ENCODE measurements at regions of chr14 and their contacts with region 1.

Region 1: DNA sequence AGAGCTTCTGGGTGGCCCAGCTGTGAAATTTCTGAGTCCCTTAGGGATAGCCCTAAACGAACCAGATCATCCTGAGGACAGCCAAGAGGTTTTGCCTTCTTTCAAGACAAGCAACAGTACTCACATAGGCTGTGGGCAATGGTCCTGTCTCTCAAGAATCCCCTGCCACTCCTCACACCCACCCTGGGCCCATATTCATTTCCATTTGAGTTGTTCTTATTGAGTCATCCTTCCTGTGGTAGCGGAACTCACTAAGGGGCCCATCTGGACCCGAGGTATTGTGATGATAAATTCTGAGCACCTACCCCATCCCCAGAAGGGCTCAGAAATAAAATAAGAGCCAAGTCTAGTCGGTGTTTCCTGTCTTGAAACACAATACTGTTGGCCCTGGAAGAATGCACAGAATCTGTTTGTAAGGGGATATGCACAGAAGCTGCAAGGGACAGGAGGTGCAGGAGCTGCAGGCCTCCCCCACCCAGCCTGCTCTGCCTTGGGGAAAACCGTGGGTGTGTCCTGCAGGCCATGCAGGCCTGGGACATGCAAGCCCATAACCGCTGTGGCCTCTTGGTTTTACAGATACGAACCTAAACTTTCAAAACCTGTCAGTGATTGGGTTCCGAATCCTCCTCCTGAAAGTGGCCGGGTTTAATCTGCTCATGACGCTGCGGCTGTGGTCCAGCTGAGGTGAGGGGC is 38.9 kb downstream of the DAD1 start:
- DNase-seq: peak; percentile 71
- H3K4me3 Mint-ChIP-seq: peak overlapping the region; percentile 68
- H3K27ac Mint-ChIP-seq: peak overlapping the region; percentile 94
- H3K4me1 Mint-ChIP-seq: peaks cover 92% of the 10 kb centered on the region
- H3K27me3 Mint-ChIP-seq: no peaks in the 10 kb centered on the region

Region 2: DNA sequence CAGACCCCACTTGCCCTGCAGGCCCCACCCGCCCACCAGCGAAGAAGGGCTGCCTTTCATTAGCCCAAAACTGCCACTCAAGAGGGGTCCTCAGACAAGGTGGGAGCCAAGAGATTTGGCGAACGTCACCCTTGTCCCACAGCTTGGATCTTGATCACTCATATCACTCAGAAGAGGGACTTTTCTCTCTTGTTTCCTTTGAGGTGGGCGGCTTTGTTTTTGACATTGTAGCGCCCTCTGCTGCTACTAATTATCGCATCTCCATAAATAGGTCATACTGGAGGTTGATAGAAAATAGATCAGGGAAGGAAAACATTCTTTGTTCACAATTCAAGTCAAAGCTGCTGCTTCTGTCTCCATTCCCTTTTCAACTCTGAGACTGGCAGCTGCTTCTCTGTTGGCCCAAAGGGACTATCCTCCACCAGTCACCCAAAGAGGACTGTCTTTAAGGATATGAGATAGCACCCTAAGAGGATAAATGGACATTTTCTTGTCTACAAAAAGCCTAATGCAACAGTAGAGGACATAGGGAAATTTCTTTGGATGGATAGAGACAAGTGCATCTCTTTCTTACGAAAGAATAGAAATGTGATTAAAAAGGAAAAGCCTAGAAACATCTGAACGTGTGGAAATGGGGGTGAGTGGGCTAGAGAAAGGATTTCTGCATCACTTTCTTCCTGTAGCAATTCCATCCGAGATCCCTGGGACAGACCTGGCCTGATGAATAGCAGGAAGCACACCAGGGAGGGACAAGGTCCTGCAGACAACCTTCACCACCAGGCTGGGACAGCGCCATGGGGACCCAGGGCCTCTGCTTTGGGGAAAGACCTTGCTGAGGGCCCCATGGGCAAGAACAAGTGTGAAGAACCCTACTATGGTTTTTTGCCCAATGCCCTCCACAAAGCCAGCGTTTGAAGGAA is 76.9 kb before region 1 on chr14:
- CTCF ChIA-PET with region 1: no interaction called
- POLR2A ChIA-PET with region 1: no interaction called
- DNase-seq: no peak
- H3K4me3 Mint-ChIP-seq: peak overlapping the region; percentile 10
- H3K27ac Mint-ChIP-seq: no peak overlapping the region
- H3K4me1 Mint-ChIP-seq: no peaks in the 10 kb centered on the region
- H3K27me3 Mint-ChIP-seq: no peaks in the 10 kb centered on the region

Region 3: DNA sequence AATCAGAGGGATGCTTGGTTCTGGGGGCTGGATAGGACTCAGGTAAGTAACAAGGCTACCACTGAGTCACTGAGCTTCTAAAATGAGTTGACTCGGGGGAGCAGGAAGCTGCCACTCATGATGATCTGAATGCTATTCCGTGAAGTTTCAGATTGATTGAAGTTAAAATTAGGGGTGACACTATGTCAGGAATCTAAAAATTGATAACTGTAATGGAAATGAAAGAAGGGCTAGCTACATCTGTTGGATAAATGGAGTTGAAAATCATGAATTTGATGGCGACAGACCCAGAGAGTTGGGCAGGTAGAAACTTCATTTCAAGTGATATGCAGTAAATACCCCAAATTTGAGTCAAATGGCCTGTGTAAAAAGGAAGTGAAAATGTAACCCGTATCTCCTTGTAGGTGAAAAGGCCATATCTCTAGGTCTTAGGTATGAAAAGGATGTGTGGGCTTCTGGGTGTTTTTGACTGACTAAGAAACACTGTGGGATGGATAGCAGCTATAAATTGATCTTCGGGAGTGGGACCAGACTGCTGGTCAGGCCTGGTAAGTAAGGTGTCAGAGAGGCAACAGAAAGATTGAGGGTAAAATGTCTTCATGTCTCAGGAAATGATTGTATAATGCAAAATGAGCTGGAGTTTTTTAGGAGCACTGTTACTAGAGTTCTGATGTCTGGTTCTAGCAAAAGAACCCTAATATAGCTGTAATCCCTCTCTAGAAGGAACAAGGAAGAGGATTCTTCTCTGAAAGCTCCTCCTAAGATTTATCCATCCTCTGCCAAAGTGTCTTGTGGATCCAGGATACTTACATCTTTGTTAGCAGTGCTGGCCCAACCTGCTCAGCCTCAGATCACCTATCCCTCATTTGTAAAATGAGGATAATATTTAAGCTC is 18.4 kb before region 1 on chr14:
- CTCF ChIA-PET with region 1: interaction called, 53 read pairs
- POLR2A ChIA-PET with region 1: interaction called, 7 read pairs
- DNase-seq: no peak
- H3K4me3 Mint-ChIP-seq: peak overlapping the region; percentile 77
- H3K27ac Mint-ChIP-seq: peak overlapping the region; percentile 91
- H3K4me1 Mint-ChIP-seq: peaks cover 89% of the 10 kb centered on the region
- H3K27me3 Mint-ChIP-seq: no peaks in the 10 kb centered on the region

Region 4: GRCh38 chr14:22536853-22537338 is 13.2 kb before region 1 on chr14:
- CTCF ChIA-PET with region 1: interaction called, 53 read pairs
- POLR2A ChIA-PET with region 1: interaction called, 9 read pairs
- DNase-seq: peak; percentile 80
- H3K4me3 Mint-ChIP-seq: peak overlapping the region; percentile 77
- H3K27ac Mint-ChIP-seq: peak overlapping the region; percentile 91
- H3K4me1 Mint-ChIP-seq: peaks cover 95% of the 10 kb centered on the region
- H3K27me3 Mint-ChIP-seq: no peaks in the 10 kb centered on the region